ENCODE measurements at regions of chr1 and their contacts with region 1.

Region 1: DNA sequence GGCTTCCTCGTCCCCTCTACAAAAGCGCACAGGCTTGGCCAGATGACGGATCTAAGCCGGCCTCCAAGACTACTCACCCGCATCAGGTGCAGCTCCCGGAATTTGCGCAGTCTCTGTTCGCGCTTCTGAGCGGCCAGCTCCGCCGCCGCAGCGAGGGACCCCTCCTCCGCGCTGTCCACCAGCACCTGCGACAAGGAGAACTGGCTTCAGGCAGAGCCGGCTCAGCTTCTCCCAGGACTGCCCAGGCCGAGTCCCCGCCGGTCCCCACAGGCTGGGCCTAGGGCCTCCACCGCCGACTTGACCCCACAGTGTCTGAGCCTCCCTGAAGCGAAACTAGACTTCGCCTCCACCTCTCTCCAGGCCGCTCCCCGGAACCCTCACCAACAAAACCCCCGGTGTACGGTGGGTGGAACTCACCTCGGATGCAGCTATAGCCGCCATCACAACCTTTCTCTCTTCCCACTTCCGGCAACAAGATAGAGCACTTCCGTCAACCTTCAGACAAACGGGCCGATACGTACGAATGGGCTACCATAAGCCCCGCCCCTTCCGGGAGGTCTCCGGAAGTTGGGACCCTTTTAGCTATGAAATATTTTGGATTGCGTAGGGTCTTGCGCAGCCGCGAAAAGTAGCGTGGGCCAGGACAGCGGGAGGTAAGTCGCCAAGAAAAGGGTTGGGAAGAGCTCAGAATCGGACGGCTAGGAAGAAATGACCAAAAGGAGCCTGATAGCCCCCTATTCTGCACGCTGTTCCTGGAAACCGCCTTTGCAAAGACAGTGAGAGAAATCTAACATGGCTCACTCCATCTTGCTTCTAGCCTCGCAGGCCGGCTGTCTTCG is at the start of gene SYF2:
- DNase-seq: peak; percentile 95

Region 2: DNA sequence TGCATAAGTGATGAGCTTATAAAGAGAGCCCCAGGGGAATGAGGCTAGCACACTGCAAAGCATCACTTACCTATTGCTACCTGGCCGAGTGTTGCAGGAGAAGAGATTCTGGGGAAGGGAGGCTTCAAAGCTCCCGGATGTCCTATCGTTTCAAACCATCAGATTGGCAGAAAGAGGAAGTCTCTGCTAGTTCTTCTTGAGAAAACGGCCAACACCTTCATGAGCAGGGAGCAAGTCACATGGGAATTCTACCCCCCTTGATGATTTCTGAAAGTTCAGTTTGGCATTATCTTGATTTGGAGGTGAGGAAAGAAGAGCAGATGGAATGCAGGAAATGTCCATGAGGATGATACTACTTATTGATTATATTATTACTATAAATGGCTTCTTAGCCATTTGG is 16.1 kb before region 1 on chr1:
- CTCF ChIA-PET with region 1: no interaction called
- POLR2A ChIA-PET with region 1: interaction called, 12 read pairs
- DNase-seq: no peak

Region 3: DNA sequence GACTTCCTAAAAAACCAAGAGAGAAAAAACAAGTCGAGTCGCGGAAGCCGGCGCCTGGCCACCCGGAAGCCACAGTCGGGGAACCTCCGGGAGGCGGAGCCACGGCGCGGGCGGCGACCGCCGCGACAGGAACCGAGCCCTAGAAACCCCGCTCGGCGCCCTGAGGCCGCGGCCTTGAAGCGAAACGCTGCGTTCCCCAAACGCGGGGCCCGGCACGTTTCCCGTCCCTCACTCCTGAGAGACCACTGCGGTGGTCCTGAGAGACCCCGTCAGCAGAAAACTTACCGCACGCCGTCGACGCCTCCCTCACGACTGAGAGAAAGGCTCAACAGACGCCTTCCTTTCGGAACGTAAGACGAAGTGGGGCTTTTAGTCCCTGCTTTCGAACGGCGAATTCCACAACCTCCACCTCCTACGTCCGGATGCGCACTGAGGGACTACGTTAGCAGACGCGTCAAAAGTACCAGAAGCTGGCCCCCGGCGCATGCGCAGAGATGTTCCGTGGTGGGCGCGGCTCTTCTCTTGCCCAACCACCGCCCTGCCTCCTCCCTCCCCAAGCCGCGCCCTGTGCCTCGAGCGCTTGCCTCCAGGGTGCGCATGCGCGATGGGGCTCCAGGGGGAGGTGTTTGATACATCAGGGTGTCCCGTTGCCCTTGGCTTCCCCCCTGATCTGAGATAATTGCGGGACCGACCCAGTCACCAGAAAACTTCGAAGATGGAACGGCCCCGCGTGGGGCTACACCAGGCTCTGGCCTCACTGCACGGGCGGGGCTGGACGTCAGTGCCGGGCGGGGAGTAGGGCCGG is 15.0 kb after region 1 on chr1 and contains the start of gene RSRP1:
- CTCF ChIA-PET with region 1: no interaction called
- POLR2A ChIA-PET with region 1: interaction called, 45 read pairs
- DNase-seq: peak; percentile 99

Region 4: DNA sequence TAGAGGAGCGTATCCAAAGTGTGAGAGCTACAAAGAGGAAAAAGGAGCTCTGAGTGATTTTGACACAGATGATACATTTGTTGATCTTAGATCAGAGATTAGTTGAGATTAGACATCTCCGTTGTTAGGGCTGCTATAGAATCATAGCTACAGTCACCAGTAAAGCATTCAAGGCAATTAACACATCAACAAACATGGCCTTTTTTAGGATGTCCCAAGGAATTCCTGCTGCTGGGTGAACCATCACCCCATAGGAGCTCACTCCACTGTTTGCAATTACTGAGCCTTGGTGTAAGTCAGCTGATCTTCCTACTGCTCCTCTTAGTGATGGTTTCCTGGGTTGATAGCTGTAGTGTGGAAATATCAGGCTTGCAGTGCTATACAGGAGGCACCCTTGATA is 21.7 kb after region 1 on chr1:
- CTCF ChIA-PET with region 1: no interaction called
- POLR2A ChIA-PET with region 1: interaction called, 45 read pairs
- DNase-seq: no peak